Naive thymus-derived CD4-positive, alpha-beta T cell (primary cell): ENCODE measurements at regions of chr9 and their contacts with region 1.

Region 1: GRCh38 chr9:135992486-135993408 is 31.6 kb upstream of the UBAC1 start:
- DNase-seq: peak in 6 of 9 donors; percentile 19 to 35 (median 24)
- ATAC-seq: peak; percentile 73
- H3K4me3 ChIP-seq: no peak overlapping the region
- H3K4me3 Mint-ChIP-seq: peak overlapping the region in 8 of 10 donors; percentile 11 to 68 (median 47)
- H3K27ac ChIP-seq: peak overlapping the region; percentile 35
- H3K27ac Mint-ChIP-seq: peak overlapping the region in 4 of 9 donors; percentile 52 to 82 (median 58)
- H3K4me1 ChIP-seq: peaks cover 14 to 17% of the 10 kb centered on the region in 2 donors
- H3K4me1 Mint-ChIP-seq: peaks cover 4 to 34% (median 12%) of the 10 kb centered on the region in 7 donors
- H3K27me3 ChIP-seq: no peaks in the 10 kb centered on the region
- H3K27me3 Mint-ChIP-seq: no peaks in the 10 kb centered on the region

Region 2: GRCh38 chr9:135536216-135536615 is 456.5 kb before region 1 on chr9:
- CTCF ChIA-PET with region 1: no interaction called
- POLR2A ChIA-PET with region 1: no interaction called
- intact Hi-C with region 1: no loop called
- DNase-seq: no peak
- ATAC-seq: no peak
- H3K4me3 ChIP-seq: no peak overlapping the region
- H3K4me3 Mint-ChIP-seq: no peak overlapping the region
- H3K27ac ChIP-seq: no peak overlapping the region
- H3K27ac Mint-ChIP-seq: no peak overlapping the region
- H3K4me1 ChIP-seq: no peaks in the 10 kb centered on the region
- H3K4me1 Mint-ChIP-seq: no peaks in the 10 kb centered on the region
- H3K27me3 ChIP-seq: no peaks in the 10 kb centered on the region
- H3K27me3 Mint-ChIP-seq: peaks cover 4 to 45% (median 37%) of the 10 kb centered on the region in 5 donors

Region 3: DNA sequence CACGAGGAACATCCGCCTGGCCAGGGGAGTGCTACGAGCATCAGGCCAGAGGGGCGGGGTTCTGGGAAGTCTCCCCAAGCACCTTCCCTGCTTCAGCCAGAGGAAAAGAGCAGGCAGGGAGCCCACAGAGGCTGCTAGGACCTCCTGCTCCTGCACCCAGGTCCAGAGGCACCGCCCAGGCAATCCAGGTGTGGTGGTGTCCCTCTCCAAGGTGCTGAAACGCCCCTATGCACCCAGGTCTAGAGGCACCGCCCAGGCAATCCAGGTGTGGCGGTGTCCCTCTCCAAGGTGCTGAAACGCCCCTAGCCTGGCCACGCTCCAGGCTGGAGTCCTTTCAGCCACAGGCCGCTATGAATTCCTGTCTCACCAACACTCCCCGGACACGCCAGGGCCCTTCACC is 20.9 kb before region 1 on chr9:
- CTCF ChIA-PET with region 1: interaction called, 5 read pairs
- POLR2A ChIA-PET with region 1: interaction called, 4 read pairs
- intact Hi-C with region 1: loop called in 1 of 2 experiments (anchors 1 kb)
- DNase-seq: peak in 8 of 9 donors; percentile 34 to 61 (median 56)
- ATAC-seq: peak; percentile 60
- H3K4me3 ChIP-seq: no peak overlapping the region
- H3K4me3 Mint-ChIP-seq: no peak overlapping the region
- H3K27ac ChIP-seq: no peak overlapping the region
- H3K27ac Mint-ChIP-seq: peak overlapping the region in 1 of 9 donors; percentile 37
- H3K4me1 ChIP-seq: peaks cover 4 to 8% of the 10 kb centered on the region in 2 donors
- H3K4me1 Mint-ChIP-seq: peaks cover 6 to 14% (median 8%) of the 10 kb centered on the region in 7 donors
- H3K27me3 ChIP-seq: no peaks in the 10 kb centered on the region
- H3K27me3 Mint-ChIP-seq: peaks cover 0 to 6% (median 3%) of the 10 kb centered on the region in 5 donors

Region 4: GRCh38 chr9:135978642-135979546 is 13.9 kb before region 1 on chr9:
- CTCF ChIA-PET with region 1: interaction called, 3 read pairs
- POLR2A ChIA-PET with region 1: interaction called, 8 read pairs
- intact Hi-C with region 1: loop called in 1 of 2 experiments (anchors 1 kb)
- DNase-seq: peak in 8 of 9 donors; percentile 44 to 84 (median 76)
- ATAC-seq: peak; percentile 93
- H3K4me3 ChIP-seq: peak overlapping the region; percentile 36
- H3K4me3 Mint-ChIP-seq: peak overlapping the region; percentile 30 to 83 (median 73)
- H3K27ac ChIP-seq: no peak overlapping the region
- H3K27ac Mint-ChIP-seq: peak overlapping the region in 8 of 9 donors; percentile 42 to 85 (median 72)
- H3K4me1 ChIP-seq: peaks cover 11 to 21% of the 10 kb centered on the region in 2 donors
- H3K4me1 Mint-ChIP-seq: peaks cover 4 to 20% (median 6%) of the 10 kb centered on the region in 7 donors
- H3K27me3 ChIP-seq: no peaks in the 10 kb centered on the region
- H3K27me3 Mint-ChIP-seq: no peaks in the 10 kb centered on the region

Region 5: DNA sequence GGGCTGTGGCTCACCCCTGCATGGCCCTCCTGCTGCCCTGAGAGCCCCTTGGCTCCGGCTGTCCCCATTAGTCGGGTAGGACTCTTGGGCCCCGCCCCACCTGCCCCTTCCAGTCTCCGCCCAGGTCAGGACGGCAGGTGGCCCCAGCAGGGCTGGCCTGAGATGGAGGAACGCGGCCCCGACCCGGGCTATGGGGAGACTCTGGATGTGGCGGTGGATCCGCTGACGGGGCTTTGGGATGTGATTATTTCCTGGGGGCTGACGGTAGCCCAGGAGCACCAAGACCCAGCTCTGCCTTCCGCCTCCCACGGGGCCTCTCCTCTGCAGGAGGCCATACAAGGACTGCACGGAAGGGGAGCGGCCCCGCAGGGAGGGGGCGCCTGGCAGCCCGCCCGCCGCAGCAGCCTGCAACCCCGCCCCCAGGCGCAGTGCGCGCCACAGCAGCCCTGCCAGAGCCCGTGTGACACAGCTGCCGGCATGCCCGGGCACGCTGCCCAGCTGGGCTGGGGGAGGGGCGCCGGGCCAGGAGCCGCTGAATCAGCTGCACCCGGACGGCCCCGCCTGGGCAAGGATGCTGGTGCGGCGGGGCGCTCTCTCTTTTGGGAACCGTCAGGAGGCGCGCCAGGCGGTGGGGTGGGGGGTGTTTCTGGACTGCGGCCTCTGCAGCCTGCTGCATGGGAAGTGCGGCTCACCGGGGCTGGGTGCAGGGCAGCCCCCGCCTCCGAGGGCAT is 116.8 kb after region 1 on chr9:
- CTCF ChIA-PET with region 1: no interaction called
- POLR2A ChIA-PET with region 1: no interaction called
- intact Hi-C with region 1: loop called in 1 of 2 experiments (anchors 1 kb)
- DNase-seq: peak; percentile 80 to 93 (median 89)
- ATAC-seq: peak; percentile 96
- H3K4me3 ChIP-seq: peak overlapping the region; percentile 69
- H3K4me3 Mint-ChIP-seq: peak overlapping the region; percentile 78 to 91 (median 88)
- H3K27ac ChIP-seq: peak overlapping the region; percentile 82
- H3K27ac Mint-ChIP-seq: peak overlapping the region; percentile 64 to 93 (median 91)
- H3K4me1 ChIP-seq: peaks cover 60 to 75% of the 10 kb centered on the region in 2 donors
- H3K4me1 Mint-ChIP-seq: peaks cover 42 to 82% (median 64%) of the 10 kb centered on the region in 7 donors
- H3K27me3 ChIP-seq: no peaks in the 10 kb centered on the region
- H3K27me3 Mint-ChIP-seq: no peaks in the 10 kb centered on the region

Region 6: DNA sequence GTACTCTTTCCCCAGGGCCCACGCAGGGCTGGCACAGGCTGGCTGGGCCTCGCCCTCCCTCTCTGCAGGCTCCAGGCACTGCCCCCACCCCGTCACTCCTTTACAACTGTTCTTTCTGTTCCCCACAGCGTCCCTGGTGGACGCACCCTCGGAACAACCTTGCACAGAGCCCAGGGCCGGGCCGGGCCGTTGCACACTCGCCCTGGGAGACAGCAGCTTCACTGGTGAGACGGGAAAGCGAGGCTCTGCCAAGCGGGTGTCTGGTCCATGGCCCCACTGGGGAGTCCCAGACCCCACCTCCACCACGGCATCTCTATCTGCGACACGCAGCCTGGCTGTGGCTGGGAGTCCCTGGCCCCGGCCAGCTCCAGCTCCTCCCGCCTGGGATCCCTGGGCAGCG is 271.3 kb after region 1 on chr9:
- CTCF ChIA-PET with region 1: no interaction called
- POLR2A ChIA-PET with region 1: no interaction called
- intact Hi-C with region 1: no loop called
- DNase-seq: no peak
- ATAC-seq: no peak
- H3K4me3 ChIP-seq: no peak overlapping the region
- H3K4me3 Mint-ChIP-seq: no peak overlapping the region
- H3K27ac ChIP-seq: no peak overlapping the region
- H3K27ac Mint-ChIP-seq: no peak overlapping the region
- H3K4me1 ChIP-seq: peaks cover 4 to 7% of the 10 kb centered on the region in 2 donors
- H3K4me1 Mint-ChIP-seq: peaks cover 0 to 14% (median 3%) of the 10 kb centered on the region in 7 donors
- H3K27me3 ChIP-seq: no peaks in the 10 kb centered on the region
- H3K27me3 Mint-ChIP-seq: peaks cover 0 to 8% (median 0%) of the 10 kb centered on the region in 5 donors